ENCODE measurements at regions of chr10 and their contacts with region 1.

Region 1: GRCh38 chr10:110354322-110354766 is 49.6 kb upstream of the SMNDC1 start:
- DNase-seq: peak; percentile 94
- ATAC-seq: peak; percentile 39
- H3K4me3 Mint-ChIP-seq: peak overlapping the region; percentile 68
- H3K27ac Mint-ChIP-seq: peak overlapping the region; percentile 98
- H3K4me1 Mint-ChIP-seq: peaks cover 67% of the 10 kb centered on the region
- H3K27me3 Mint-ChIP-seq: no peaks in the 10 kb centered on the region

Region 2: GRCh38 chr10:110326351-110327032 is 27.9 kb before region 1 on chr10:
- CTCF ChIA-PET with region 1: interaction called, 4 read pairs
- POLR2A ChIA-PET with region 1: interaction called, 9 read pairs
- intact Hi-C with region 1: loop called (anchors 2 kb)
- DNase-seq: no peak
- ATAC-seq: peak; percentile 38
- H3K4me3 Mint-ChIP-seq: no peak overlapping the region
- H3K27ac Mint-ChIP-seq: peak overlapping the region; percentile 63
- H3K4me1 Mint-ChIP-seq: peaks cover 42% of the 10 kb centered on the region
- H3K27me3 Mint-ChIP-seq: peaks cover 4% of the 10 kb centered on the region

Region 3: GRCh38 chr10:110387983-110388687 is 33.8 kb after region 1 on chr10:
- CTCF ChIA-PET with region 1: no interaction called
- POLR2A ChIA-PET with region 1: no interaction called
- intact Hi-C with region 1: loop called in 1 of 2 experiments (anchors 2 kb)
- DNase-seq: peak; percentile 54
- ATAC-seq: peak; percentile 68
- H3K4me3 Mint-ChIP-seq: no peak overlapping the region
- H3K27ac Mint-ChIP-seq: peak overlapping the region; percentile 84
- H3K4me1 Mint-ChIP-seq: peaks cover 30% of the 10 kb centered on the region
- H3K27me3 Mint-ChIP-seq: no peaks in the 10 kb centered on the region

Region 4: DNA sequence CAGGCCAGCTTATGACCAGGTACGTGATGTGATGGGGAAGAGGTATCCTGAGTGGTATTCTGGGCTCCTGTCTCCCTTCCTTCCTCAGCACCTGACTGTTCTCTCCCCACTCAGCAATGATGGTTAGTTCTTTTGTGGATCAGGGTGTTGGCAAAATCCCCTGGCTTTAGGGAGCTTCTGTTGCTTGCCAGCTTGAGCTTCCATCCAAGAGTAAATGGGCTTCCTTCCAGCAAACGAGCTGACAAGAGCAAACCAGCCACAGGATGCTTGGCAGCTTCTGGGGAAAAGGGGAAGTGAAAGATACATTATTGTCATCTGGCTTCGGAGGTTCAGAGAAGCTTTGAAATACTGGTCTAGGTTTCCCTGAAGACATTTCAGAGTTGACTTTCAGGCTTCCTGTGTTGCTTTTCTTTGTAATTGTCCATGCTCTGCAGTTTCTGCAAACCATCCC is 148.5 kb after region 1 on chr10:
- CTCF ChIA-PET with region 1: interaction called, 28 read pairs
- POLR2A ChIA-PET with region 1: interaction called, 23 read pairs
- intact Hi-C with region 1: loop called (anchors 1 kb)
- DNase-seq: peak; percentile 46
- ATAC-seq: peak; percentile 11
- H3K4me3 Mint-ChIP-seq: peak overlapping the region; percentile 95
- H3K27ac Mint-ChIP-seq: peak overlapping the region; percentile 94
- H3K4me1 Mint-ChIP-seq: peaks cover 79% of the 10 kb centered on the region
- H3K27me3 Mint-ChIP-seq: no peaks in the 10 kb centered on the region

Region 5: DNA sequence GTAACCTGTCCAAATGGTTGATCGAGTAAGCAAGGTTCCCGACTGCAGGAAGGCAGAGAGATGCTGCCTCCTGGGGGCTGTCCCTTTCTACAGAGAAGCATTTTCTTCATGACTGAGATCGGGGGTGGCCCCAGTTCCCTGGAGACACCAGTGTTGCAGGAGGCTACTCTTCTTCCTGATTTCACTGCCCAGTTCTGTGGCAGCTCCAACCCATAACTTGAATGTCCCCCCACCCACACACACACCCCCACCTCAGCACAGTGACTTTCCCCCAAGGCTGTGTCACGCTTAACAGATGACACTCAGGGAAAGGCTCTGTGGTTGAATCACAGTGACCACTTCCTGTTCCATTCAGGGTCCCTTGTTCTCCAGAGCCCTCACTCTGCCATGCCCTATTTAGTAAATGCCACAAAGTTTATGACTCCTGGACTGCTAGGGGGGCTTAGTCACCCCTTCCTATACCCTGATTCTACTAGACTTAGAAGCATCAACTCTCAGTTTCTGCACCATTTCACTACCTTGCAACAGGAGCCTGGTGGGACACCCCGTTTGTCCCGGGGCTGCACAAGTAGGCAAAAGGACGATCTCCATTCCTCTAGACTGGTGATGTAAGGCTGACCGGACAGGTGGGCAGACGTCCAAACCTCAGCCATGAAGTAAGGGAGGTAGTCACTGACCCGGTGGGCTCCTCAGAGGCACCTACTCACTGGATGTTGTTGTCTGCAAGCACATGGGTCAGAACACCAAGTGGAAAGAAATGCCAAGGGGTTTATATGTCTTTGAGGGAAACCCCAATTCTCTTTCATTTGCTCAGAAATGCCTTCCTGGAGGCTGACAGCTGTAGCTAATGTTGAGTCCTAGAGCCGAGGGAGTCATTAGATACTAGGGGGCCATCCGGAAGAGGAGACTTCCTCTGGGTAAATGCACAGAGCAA is 181.9 kb after region 1 on chr10:
- CTCF ChIA-PET with region 1: interaction called, 9 read pairs
- POLR2A ChIA-PET with region 1: no interaction called
- intact Hi-C with region 1: loop called (anchors 1 kb)
- DNase-seq: peak; percentile 87
- ATAC-seq: peak; percentile 93
- H3K4me3 Mint-ChIP-seq: peak overlapping the region; percentile 15
- H3K27ac Mint-ChIP-seq: peak overlapping the region; percentile 79
- H3K4me1 Mint-ChIP-seq: peaks cover 37% of the 10 kb centered on the region
- H3K27me3 Mint-ChIP-seq: peaks cover 3% of the 10 kb centered on the region

Measured in activated CD4-positive, alpha-beta T cell treated with anti-CD3 and anti-CD28 coated beads for 36 hours (primary cell).